Right ventricle myocardium inferior (tissue), 1 donor: ENCODE measurements at regions of chr4 and their contacts with region 1.

Region 1: GRCh38 chr4:109764789-109765402 is 35.0 kb upstream of the PLA2G12A start:
- DNase-seq: no peak
- ATAC-seq: peak; percentile 60

Region 2: DNA sequence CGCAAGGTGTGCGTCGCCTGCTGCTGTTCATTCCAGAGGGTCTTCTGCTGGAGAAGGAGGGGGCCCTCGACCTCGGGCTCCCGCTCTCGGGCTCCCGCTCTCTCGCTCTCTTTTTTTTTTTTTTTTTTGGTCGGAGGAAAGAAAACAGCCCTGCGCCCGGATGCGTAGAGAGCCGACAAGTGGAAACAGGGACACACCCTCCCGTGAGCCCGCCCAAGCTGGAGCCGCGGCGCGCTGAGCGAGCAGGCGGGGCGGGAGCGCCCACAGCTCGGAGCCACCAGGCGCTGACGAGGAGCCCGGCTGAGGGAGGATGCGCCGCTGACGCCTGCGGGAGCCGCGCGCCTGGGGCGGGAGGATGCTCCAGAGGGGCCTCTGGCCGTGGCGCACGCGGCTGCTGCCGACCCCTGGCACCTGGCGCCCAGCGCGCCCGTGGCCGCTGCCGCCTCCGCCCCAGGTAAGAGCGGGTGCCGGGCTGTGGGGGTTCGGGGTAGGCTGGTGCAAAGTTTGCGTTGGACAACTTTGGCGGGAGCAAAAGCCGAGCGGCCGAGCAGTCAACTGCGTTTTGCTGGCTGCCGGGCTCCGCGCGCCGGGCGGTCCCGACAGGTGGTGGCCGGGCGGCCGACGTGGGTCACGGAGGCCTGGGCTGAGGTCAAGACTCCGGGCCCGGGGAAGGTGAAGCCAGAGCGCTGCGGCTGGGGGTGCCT is 204.8 kb before region 1 on chr4 and contains the start of gene MCUB:
- intact Hi-C with region 1: loop called (anchors 5 kb)
- DNase-seq: peak; percentile 94
- ATAC-seq: peak; percentile 99
- total RNA-seq, gene MCUB: 5.1 TPM

Region 3: DNA sequence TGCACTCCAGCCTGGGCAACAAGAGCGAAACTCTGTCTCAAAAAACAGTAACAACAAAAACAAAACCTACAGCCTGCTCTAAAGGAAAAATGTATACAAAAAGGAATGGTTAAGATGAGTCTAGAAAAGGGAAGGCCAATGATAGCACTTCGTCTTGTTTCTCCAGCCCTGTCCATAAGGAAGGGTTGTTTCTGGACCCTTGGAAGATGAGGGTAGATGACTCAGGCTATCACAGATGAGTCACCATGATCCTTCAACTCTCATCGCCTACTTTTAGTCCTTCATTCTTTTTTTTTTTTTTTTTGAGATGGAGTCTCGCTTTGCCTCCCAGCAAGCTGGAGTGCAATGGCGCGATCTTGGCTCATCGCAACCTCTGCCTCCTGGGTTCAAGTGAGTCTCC is 43.9 kb before region 1 on chr4:
- intact Hi-C with region 1: no loop called
- DNase-seq: no peak
- ATAC-seq: no peak

Region 4: DNA sequence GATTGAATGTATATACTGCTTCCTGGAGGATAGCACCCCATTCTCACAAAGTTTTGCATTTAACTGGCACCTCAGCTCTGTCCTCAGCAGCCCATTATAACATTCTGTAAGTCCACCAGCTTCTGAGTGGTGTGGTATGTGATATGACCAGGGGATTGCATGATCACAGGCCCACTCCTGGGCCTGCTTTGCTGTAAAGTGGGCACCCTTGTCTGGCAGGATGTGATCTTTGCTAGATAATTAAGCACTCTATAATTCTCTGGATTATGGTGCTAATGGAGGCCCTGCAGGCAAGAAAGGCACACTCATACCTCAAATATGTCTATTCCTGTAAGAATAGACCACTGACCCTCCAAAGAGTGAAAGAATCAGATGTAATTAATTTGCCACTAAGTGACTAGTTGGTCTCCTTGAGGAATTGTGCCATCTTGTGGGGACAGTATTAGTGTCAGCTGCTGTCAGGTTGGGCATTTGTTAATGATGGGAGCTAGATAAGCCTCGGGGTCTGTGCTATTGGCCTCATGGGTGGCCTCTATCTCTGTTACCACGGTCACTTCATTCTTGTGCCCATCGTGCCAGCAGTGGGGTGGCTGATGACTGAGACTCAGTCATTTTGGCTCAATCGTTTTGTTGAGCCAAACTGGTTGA is 39.2 kb after region 1 on chr4:
- intact Hi-C with region 1: no loop called
- DNase-seq: no peak
- ATAC-seq: no peak

Region 5: DNA sequence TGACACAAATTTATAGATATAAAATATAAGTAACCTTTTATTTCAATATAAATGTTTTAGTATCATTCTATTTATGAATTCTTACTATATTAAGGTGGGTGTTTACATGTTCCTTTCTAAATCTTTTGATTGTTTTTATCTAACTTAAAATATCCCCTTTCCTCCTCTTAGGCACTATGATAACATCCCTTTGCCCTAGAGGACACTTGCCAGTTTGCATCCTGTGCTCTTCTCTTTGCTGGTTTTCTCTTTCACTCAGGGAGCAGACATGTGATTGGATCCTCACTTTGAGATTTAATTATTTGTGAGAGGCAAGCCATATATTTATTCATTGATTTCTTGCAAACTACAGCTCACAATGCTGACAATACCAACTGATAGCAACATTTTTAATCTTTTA is 99.2 kb after region 1 on chr4:
- intact Hi-C with region 1: no loop called
- DNase-seq: no peak
- ATAC-seq: no peak